Psoas muscle (tissue), 8 donors: ENCODE measurements at regions of chr6 and their contacts with region 1.

Region 1: DNA sequence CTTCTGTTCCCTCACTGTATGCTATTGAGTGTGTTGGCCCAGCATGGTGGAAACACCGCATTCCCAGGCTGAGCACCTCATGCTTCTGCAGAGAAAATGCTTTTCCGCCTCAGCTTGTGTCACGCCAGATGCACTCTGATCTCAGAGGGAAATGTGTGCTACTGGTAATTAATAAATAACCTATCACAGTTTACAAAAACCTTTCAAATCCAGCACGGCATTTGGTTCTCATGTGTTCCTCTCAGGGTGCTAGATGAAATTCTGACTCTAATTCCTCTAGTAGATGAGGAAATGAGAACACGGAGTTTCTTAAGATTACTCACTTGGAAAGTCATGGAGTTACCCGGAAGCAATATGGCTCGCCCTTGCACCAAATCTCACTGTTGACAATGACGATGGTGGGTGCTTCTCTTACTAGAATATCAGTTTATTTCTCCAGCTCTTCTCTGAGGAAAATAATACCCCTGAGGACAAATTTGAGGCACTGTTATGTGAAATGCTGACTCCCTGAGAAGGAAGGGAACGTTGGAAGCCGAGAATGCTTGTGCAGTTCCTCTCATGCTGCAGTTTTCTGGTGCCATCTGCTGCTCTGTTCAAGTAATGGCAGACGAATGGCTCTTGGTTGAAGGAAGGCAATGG is 116.6 kb downstream of the RNF144B start:
- DNase-seq: peak in 1 of 2 donors; percentile 32
- ATAC-seq: peak; percentile 90 to 98 (median 93)
- H3K4me3 ChIP-seq: peak overlapping the region; percentile 67
- H3K27ac ChIP-seq: peak overlapping the region; percentile 78
- H3K4me1 ChIP-seq: peaks cover 3% of the 10 kb centered on the region
- H3K27me3 ChIP-seq: no peaks in the 10 kb centered on the region
- CTCF ChIP-seq: peak; percentile 94

Region 2: DNA sequence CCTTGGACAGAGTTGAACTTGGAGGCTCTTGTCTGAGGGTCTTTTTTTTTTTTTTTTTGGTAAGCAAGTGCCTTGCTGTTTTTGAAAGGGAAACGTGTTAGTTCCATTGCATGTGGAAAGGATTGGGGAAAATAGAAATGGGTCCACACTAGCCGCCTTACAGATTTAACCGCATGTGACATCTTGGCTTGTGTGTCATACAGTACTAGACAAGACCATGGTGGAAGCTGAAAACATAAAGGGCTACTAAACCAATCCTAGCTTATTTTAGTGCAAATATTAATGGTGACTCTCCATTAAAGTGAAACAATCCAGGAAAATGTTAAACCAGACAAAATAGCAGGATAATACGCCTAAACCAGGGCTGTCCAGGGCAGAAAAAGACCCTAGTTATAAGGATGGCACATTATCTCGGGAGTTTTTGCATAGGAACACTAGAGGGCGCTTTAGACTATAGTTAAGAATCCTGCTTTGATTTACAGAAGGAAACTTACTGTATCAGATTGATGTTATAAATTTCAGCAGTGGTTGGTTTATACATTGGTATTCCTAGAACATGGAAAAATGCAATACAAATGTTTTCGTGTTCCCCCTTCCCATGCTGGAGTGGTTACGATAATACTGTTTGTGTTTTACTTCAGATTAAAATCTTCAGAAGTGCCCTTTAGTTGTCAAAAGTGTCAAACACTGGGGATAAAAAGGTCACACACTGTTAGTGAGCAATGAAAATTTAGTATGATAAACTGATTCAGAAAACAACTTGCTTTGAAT is 179.6 kb before region 1 on chr6:
- intact Hi-C with region 1: loop called (anchors 1 to 2 kb)
- DNase-seq: no peak
- ATAC-seq: peak; percentile 67 to 90 (median 74)
- H3K4me3 ChIP-seq: no peak overlapping the region
- H3K27ac ChIP-seq: no peak overlapping the region
- H3K4me1 ChIP-seq: peaks cover 26% of the 10 kb centered on the region
- H3K27me3 ChIP-seq: no peaks in the 10 kb centered on the region
- CTCF ChIP-seq: peak; percentile 80

Region 3: GRCh38 chr6:18432180-18432579 is 71.5 kb before region 1 on chr6:
- intact Hi-C with region 1: loop called in 1 of 2 experiments (anchors 10 kb)
- DNase-seq: no peak
- ATAC-seq: peak; percentile 83 to 90 (median 88)
- H3K4me3 ChIP-seq: peak overlapping the region; percentile 23
- H3K27ac ChIP-seq: peak overlapping the region; percentile 79
- H3K4me1 ChIP-seq: peaks cover 93% of the 10 kb centered on the region
- H3K27me3 ChIP-seq: no peaks in the 10 kb centered on the region
- CTCF ChIP-seq: no peak

Region 4: GRCh38 chr6:18457065-18457812 is 46.5 kb before region 1 on chr6:
- intact Hi-C with region 1: no loop called
- DNase-seq: no peak
- ATAC-seq: peak; percentile 38 to 79 (median 66)
- H3K4me3 ChIP-seq: no peak overlapping the region
- H3K27ac ChIP-seq: peak overlapping the region; percentile 42
- H3K4me1 ChIP-seq: peaks cover 35% of the 10 kb centered on the region
- H3K27me3 ChIP-seq: no peaks in the 10 kb centered on the region
- CTCF ChIP-seq: no peak